Activated CD4-positive, alpha-beta T cell treated with anti-CD3 and anti-CD28 coated beads for 36 hours (primary cell): ENCODE measurements at regions of chr2 and their contacts with region 1.

Region 1: DNA sequence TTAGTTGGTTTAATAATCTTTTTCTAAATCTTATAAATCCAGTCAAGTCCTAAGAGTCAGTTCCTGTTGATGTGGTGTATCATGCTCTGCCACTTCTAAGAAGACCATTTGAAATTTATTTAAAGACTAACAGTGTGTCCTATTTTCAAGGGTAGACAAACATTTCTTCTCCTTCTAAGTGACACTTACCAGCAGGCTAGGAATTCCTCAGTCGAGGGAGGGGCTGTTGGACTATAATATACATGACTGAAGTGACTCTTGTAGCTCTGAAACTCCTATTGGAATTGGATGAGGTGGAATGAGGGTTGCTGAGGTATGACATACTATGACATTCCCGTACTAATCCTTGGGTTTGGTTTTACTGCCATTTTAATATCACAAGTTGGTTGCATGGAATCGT is 30.6 kb downstream of the ITGB6 start:
- DNase-seq: no peak
- ATAC-seq: no peak
- H3K4me3 Mint-ChIP-seq: no peak overlapping the region
- H3K27ac Mint-ChIP-seq: no peak overlapping the region
- H3K4me1 Mint-ChIP-seq: no peaks in the 10 kb centered on the region
- H3K27me3 Mint-ChIP-seq: peaks cover 2% of the 10 kb centered on the region

Region 2: GRCh38 chr2:159988412-159988970 is 181.0 kb before region 1 on chr2:
- CTCF ChIA-PET with region 1: no interaction called
- POLR2A ChIA-PET with region 1: no interaction called
- intact Hi-C with region 1: no loop called
- DNase-seq: no peak
- ATAC-seq: no peak
- H3K4me3 Mint-ChIP-seq: no peak overlapping the region
- H3K27ac Mint-ChIP-seq: no peak overlapping the region
- H3K4me1 Mint-ChIP-seq: no peaks in the 10 kb centered on the region
- H3K27me3 Mint-ChIP-seq: peaks cover 8% of the 10 kb centered on the region

Region 3: DNA sequence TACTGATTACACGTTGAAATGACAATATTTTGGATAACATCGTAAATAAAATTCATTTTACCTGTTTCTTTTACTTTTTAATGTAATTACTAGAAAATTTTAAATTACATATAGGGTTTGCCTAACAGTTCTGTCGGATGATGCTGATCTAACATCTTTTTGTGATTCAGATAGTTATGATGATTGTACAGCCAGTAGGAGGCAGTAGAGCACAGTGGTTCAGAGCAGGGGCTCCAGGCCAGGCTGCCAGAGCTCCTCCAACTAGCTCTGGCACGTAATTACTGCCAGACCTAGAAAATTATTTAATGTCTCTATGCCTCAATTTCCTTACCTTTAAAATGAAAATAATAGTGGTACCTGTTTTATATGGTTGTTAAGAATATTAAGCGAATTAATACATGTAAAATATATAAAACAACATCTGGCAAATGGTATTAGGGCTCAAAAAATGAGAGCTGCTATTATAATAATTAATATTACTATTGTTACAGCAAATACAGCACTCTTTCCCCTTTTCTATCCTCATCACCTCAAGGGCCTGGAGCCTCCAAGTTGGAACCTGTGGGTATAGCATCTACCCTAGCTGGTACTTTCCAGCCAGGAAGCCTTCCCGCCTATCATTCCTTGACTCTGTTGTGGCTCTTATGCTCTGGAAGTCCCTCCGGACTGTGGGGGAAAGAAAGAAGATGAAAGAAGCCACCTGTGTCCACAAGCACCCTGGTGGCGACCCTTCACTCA is 59.4 kb before region 1 on chr2:
- CTCF ChIA-PET with region 1: no interaction called
- POLR2A ChIA-PET with region 1: no interaction called
- intact Hi-C with region 1: no loop called
- DNase-seq: peak; percentile 74
- ATAC-seq: peak; percentile 82
- H3K4me3 Mint-ChIP-seq: no peak overlapping the region
- H3K27ac Mint-ChIP-seq: no peak overlapping the region
- H3K4me1 Mint-ChIP-seq: no peaks in the 10 kb centered on the region
- H3K27me3 Mint-ChIP-seq: peaks cover 4% of the 10 kb centered on the region

Region 4: DNA sequence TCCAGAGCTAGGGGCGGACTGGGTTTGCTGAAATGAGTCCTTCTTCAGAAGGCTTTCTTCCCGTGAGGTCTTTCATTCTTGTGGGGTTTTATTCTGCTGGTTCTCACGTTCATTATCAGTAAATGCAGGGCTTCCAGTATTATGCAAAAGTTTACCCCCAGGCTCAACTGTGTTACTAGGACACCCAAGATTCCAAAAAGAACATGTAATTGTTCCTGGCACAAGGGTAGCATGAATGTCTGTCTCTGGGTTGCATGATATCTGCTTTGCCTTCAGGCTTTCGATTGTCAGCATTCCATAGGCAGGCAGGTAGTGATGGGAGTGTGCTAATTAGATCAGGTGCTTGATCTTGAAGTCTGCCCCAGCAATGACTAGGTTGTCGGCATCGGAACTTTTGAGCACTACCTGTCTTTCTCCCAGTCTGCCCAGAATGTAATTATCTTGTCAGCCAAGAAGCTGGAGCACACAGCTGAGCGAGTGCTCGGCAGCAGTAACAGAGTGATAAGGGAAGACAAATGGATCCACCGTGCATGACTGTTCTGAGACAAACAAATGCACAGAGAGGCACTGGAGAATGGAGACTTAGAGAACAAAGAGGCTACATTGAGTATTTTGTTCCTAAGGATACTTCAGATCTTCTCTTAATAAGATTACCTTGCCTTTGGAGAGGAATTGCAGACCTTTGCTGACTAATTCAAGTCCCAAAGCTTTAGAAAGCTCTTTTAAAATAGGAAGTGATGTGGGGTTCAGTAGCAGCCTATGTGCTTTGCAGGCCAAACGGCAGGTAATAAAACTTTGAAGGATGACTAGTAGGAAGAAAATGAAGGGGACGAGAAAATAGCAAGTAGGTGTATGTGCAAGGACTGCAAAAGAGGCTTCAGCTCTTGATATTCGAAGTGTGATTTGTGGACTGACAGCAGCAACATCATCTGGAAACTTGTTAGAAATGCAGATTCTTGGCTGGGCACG is 11.3 kb before region 1 on chr2:
- CTCF ChIA-PET with region 1: no interaction called
- POLR2A ChIA-PET with region 1: no interaction called
- intact Hi-C with region 1: loop called in 1 of 2 experiments (anchors 1 kb)
- DNase-seq: no peak
- ATAC-seq: no peak
- H3K4me3 Mint-ChIP-seq: no peak overlapping the region
- H3K27ac Mint-ChIP-seq: no peak overlapping the region
- H3K4me1 Mint-ChIP-seq: no peaks in the 10 kb centered on the region
- H3K27me3 Mint-ChIP-seq: no peaks in the 10 kb centered on the region